ENCODE measurements at regions of chrX and their contacts with region 1.

Region 1: DNA sequence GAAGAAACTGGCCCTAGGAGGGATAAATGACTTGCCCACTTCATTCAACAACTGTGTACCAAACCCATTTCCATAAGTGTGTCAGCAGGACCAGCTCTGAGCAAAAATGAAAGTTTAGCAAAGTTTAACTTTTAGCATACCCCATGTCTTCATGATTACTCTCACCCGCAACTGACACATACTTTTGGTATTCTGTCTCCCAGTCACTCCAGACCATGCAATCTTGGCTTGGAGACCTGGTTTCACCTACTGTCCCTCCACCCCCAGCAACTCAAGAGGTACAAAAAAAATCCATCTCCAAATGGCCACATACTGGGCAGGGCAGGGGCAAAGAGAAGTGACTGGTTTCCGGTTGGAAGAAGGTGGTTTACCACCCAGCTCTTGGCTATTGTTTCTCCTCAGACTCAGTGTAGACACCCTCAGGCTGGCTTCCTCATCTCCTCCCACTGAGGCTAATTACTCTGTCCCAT is 79.8 kb downstream of the RLIM start:
- DNase-seq: no peak

Region 2: GRCh38 chrX:74160358-74160757 is 374.2 kb before region 1 on chrX:
- CTCF ChIA-PET with region 1: interaction called, 10 read pairs
- POLR2A ChIA-PET with region 1: no interaction called
- DNase-seq: no peak

Region 3: GRCh38 chrX:74514384-74514783 is 20.2 kb before region 1 on chrX:
- CTCF ChIA-PET with region 1: no interaction called
- POLR2A ChIA-PET with region 1: no interaction called
- DNase-seq: no peak

Region 4: DNA sequence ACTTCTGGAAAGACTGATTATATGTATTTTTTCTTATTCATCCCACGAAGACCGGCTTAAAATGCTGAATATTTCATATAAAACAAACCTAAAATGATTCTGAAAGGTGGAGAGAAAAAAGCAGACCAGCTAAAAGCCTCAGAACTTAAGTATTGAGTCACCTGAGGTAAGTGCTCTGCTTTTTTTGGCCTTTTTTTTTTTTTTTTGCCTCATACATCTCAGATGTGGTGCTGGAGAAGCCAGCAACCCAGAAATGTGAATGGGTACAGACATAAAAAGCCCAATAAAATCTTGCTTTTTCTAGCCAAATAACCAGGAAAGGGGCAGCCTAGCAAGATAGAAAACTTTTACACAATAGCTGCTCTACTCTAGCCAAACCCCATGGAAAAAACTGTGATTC is 22.8 kb after region 1 on chrX:
- CTCF ChIA-PET with region 1: no interaction called
- POLR2A ChIA-PET with region 1: no interaction called
- DNase-seq: no peak

Region 5: DNA sequence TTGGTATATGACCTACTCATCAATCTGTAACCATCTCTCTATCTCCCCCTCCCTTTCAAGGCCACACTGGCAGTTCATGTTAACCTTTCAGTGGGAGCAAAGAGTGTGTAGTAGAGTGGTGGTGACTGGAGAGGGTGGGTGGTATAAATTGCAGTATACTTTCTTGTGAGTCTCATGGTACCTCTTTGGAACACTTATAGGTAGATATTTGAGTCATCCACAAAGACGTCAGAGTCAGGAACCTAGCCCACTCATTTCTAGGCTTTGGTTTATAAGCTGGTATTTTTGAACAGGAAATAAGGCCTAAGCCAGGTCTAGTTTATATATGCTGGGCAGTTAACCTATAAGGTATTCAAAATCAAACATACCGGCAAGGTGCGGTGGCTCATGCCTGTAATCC is 43.5 kb after region 1 on chrX:
- CTCF ChIA-PET with region 1: no interaction called
- POLR2A ChIA-PET with region 1: no interaction called
- DNase-seq: no peak

Region 6: DNA sequence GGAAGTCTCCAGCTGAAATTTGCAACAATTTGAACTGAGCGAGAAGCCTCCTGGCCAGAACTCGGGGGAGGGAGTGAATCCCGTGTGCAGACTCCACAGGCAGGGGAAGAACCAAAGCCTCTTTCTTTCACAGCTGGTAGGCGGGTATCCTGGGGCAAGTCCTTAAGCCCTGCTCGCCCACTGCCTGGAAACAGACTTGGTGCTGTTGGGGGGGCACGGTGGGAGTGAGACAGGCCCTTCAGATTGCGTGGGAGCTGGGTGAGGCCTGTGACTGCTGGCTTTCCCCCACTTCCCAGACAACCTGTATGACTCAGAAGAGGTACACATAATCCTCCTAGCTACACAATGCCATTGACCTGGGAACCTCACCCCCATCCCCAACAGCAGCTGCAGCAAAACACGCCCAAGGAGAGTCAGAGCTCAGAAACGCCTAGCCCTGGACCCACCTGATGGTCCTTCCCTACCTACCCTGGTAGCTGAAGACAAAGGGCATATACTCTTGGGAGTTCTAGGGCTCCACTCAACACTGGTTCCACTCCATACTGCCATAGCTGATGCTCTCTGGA is 102.2 kb after region 1 on chrX:
- CTCF ChIA-PET with region 1: no interaction called
- POLR2A ChIA-PET with region 1: no interaction called
- DNase-seq: no peak